ENCODE measurements at regions of chr12 and their contacts with region 1.

Region 1: DNA sequence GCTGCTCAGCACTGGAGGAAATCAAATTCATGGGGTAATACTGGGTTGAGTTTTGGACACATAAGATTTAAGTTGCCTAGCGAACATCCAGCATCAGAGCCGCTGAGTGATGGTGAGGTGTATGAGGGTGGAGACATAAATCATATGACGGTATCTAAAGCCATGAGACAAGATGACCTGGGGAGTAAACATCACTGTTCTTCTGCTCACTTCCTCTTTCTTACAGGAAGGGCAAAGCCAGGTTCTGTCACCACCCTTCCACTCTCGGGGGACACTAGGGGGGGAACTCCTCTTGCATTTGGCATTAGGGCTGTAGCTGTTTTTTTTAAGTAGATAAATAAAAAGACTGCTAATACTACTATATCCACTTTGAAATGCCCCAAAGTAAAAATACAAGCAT is 24.0 kb downstream of the PRDM4 start:
- ATAC-seq: no peak
- H3K4me3 ChIP-seq: no peak overlapping the region
- H3K27ac ChIP-seq: no peak overlapping the region
- H3K4me1 ChIP-seq: no peaks in the 10 kb centered on the region

Region 2: GRCh38 chr12:108526482-108527165 is 789.7 kb after region 1 on chr12:
- in situ Hi-C with region 1: loop called in 1 of 9 experiments (anchors 25 kb)
- ATAC-seq: peak in 5 of 8 experiments; percentile 11 to 74 (median 32)
- H3K4me3 ChIP-seq: no peak overlapping the region
- H3K27ac ChIP-seq: no peak overlapping the region
- H3K4me1 ChIP-seq: peaks cover 0 to 6% of the 10 kb centered on the region in 2 donors